H1 (cell line): ENCODE measurements at regions of chr7 and their contacts with region 1.

Region 1: GRCh38 chr7:99504603-99505323 is at the start of gene ZKSCAN5:
- DNase-seq: peak; percentile 82 to 99
- H3K4me3 ChIP-seq: peak within 1 kb of the TSS; percentile 89 to 97 (median 94)
- H3K27ac ChIP-seq: peak within 1 kb of the TSS; percentile 89
- H3K4me1 ChIP-seq: peaks cover 0 to 7% (median 4%) of the 10 kb centered on the region in 4 experiments; a peak in 5 of 7 replicates
- H3K27me3 ChIP-seq: no peaks in the 10 kb centered on the region
- CTCF ChIP-seq: no peak
- EP300 ChIP-seq: peak in 1 of 2 experiments; percentile 58; a peak in 1 of 3 replicates
- POLR2A ChIP-seq: peak; percentile 78 to 83
- RAD21 ChIP-seq: no peak
- total RNA-seq, gene ZKSCAN5: 12.9 and 13.5 TPM in 2 replicates

Region 2: DNA sequence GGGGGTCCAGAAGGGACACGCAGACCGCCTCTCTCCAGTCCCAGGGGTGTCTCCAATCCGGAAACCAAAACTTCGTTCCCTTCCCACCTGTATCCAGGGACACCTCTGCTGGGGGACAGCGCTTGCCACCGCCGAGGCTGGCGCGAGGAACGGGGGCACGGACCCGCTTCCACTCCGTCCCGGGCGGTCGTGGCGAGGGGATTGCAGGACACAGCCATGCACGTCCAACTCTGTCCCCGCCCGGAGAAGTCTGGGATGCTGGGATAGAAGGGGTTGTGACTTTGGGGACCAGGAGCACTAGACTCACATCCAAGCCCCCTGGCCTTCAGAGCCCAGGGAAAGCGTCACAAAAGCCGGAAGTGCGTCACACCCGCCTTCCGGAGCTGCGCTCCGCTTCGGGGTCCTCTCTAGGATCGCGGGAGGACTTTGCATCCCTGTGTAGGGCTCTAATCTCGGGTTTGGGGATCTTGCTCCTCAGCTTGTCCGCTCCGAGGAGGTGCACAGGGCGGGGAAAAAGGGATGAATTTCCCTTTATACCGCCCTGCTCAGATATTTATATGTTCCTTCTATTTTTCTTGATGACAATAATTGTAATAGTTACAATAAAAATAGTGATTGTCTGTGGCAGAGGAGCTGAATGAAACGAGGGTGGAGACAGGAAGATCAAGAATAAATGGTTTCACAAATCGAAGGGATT is 47.2 kb after region 1 on chr7 and contains the start of gene FAM200A:
- CTCF ChIA-PET with region 1: interaction called, 3 read pairs
- POLR2A ChIA-PET with region 1: interaction called, 20 read pairs
- DNase-seq: peak in 1 of 2 experiments; percentile 87
- H3K4me3 ChIP-seq: peak within 1 kb of the TSS; percentile 94 to 98 (median 96)
- H3K27ac ChIP-seq: peak within 1 kb of the TSS; percentile 83
- H3K4me1 ChIP-seq: no peaks in the 10 kb centered on the region
- H3K27me3 ChIP-seq: no peaks in the 10 kb centered on the region
- CTCF ChIP-seq: no peak
- EP300 ChIP-seq: peak in 1 of 2 experiments; percentile 25; a peak in 1 of 3 replicates
- POLR2A ChIP-seq: peak; percentile 82 to 95
- RAD21 ChIP-seq: no peak
- total RNA-seq, gene FAM200A: 7.5 and 7.6 TPM in 2 replicates